ENCODE measurements at regions of chr1 and their contacts with region 1.

Region 1: DNA sequence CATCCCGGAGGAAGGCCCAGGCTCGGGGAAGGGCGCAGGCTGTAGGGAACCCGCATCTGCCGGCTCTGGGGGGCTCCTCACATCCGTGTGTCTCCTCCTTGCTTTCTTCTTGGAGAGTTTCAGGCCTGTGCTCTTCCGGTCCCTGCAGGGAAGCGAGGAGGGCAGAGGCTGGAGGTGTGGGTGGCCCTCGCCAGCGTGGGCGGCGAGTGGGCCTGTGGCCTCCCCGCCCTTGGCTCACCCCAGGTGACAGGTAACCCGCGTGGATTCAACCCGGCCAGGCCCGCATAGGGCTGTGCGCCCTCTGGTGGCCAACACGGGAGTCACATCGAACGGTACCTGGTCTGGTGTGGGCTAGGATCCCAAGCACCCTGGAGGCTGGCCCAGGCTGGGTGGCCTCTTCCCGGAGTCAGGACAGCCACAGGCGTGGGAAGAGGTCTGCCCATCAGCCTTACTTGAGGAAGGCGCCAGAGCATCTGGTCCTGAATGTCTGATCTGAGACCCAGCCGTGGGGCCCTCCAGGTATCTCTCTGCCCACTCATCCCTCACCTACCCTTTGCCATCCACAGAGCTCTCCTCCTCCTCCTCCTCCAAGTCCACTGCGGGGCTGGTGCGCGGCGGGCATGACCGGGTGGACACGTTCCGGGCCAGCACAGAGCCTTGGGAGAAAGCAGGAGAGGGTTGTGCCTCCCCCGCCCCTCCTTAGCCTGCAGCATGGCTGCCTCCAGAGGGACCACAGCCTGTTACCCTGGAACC is 9.6 kb upstream of the TNFRSF25 start:
- DNase-seq: peak; percentile 81
- H3K4me3 Mint-ChIP-seq: no peak overlapping the region
- H3K27ac Mint-ChIP-seq: no peak overlapping the region
- H3K4me1 Mint-ChIP-seq: peaks cover 3% of the 10 kb centered on the region
- H3K27me3 Mint-ChIP-seq: no peaks in the 10 kb centered on the region

Region 2: GRCh38 chr1:6423321-6423999 is 52.1 kb before region 1 on chr1:
- CTCF ChIA-PET with region 1: interaction called, 5 read pairs
- intact Hi-C with region 1: loop called (anchors 1 kb)
- DNase-seq: peak; percentile 87
- H3K4me3 Mint-ChIP-seq: peak overlapping the region; percentile 18
- H3K27ac Mint-ChIP-seq: no peak overlapping the region
- H3K4me1 Mint-ChIP-seq: peaks cover 10% of the 10 kb centered on the region
- H3K27me3 Mint-ChIP-seq: peaks cover 39% of the 10 kb centered on the region

Region 3: DNA sequence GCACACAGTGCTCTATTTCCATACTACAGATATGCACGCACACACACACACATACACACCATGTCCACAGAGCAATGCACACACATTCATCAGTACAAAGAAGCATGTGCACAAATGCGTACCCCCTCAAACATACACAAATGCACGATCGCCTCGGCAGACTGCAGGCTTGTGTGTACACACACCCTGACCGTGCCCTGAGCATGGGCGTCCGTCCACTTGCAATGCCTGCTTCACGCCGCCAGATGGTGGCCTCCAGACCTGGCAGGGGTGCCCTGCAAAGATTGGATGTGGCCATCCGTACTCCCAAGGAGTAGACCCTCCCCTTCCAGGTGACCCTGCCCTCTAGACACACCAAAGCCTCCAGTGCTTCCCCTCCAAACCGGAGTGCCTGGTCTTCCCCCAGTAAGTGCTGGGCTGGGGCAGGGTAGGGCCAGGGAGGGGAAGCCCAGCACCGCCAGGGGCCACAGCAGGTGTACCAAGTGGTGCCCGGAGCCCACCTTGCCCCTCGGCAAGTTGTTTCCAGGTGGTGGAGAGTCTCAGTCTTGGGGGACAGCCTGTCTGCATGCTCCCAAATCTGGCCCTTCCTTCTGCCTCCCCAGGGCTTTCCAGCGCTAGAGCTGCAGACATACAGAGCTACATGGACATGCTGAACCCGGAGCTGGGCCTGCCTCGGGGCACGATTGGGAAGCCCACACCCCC is 30.3 kb before region 1 on chr1:
- CTCF ChIA-PET with region 1: interaction called, 4 read pairs
- intact Hi-C with region 1: loop called (anchors 2 kb)
- DNase-seq: peak; percentile 62
- H3K4me3 Mint-ChIP-seq: no peak overlapping the region
- H3K27ac Mint-ChIP-seq: no peak overlapping the region
- H3K4me1 Mint-ChIP-seq: peaks cover 15% of the 10 kb centered on the region
- H3K27me3 Mint-ChIP-seq: peaks cover 45% of the 10 kb centered on the region